HEK293T (cell line): ENCODE measurements at regions of chr4 and their contacts with region 1.

Region 1: GRCh38 chr4:120443116-120443515 is 376.5 kb upstream of the MAD2L1 start:
- DNase-seq: no peak

Region 2: DNA sequence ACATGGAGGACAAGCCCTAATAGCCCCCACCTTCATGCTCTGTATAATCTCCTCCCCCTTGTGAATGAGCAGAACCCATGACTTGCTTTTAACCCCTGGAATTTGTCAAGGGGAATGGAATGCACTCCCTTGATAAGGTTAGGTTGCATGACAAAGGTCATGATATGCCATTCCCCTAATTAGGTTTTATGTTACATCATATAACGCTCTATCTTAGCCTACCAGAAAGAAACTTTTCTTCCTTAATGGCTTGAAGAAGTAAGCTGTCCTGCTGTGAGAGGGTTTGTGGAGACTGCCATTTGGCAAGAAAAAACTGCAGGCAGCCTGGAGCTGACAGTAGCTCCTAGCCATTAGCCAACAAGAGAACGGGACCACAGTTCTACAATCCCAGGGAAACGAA is 23.3 kb after region 1 on chr4:
- CTCF ChIA-PET with region 1: no interaction called
- POLR2A ChIA-PET with region 1: no interaction called
- DNase-seq: peak; percentile 22

Region 3: GRCh38 chr4:120688791-120689190 is 245.7 kb after region 1 on chr4:
- CTCF ChIA-PET with region 1: interaction called, 10 read pairs
- POLR2A ChIA-PET with region 1: no interaction called
- DNase-seq: no peak